ENCODE measurements at regions of chr12 and their contacts with region 1.

Region 1: GRCh38 chr12:103965590-103966504 is at the start of gene TDG:
- DNase-seq: peak in 1 of 2 donors; percentile 99
- H3K4me3 ChIP-seq: peak within 1 kb of the TSS; percentile 75 to 89
- H3K27ac ChIP-seq: peak within 1 kb of the TSS; percentile 91
- H3K4me1 ChIP-seq: peaks cover 52% of the 10 kb centered on the region
- H3K27me3 ChIP-seq: no peaks in the 10 kb centered on the region
- CTCF ChIP-seq: peak in 2 of 3 experiments; percentile 6 to 54
- POLR2A ChIP-seq: peak in 1 of 2 donors; percentile 78
- total RNA-seq, gene TDG: 24.6 TPM

Region 2: DNA sequence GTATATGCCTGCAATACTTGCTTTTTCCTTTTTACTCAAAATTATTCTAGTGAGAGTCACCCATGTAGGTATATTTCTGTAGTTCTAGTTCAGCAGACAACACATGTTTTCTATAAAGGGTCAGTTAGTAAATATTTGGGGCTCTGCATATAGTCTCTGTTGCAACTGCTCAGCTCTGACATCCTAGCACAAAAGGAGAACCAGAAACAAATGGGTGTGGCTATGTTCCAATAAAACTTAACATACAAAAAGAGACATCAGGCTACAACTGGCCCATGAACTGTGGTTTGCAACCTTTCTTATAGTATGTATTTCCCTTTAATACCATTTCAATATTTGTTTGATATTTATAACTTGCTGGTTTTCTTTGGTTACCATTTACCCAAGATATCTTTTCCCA is 136.8 kb before region 1 on chr12:
- intact Hi-C with region 1: no loop called
- DNase-seq: no peak
- H3K4me3 ChIP-seq: no peak overlapping the region
- H3K27ac ChIP-seq: no peak overlapping the region
- H3K4me1 ChIP-seq: peaks cover 64% of the 10 kb centered on the region
- H3K27me3 ChIP-seq: no peaks in the 10 kb centered on the region
- CTCF ChIP-seq: no peak
- POLR2A ChIP-seq: no peak

Region 3: DNA sequence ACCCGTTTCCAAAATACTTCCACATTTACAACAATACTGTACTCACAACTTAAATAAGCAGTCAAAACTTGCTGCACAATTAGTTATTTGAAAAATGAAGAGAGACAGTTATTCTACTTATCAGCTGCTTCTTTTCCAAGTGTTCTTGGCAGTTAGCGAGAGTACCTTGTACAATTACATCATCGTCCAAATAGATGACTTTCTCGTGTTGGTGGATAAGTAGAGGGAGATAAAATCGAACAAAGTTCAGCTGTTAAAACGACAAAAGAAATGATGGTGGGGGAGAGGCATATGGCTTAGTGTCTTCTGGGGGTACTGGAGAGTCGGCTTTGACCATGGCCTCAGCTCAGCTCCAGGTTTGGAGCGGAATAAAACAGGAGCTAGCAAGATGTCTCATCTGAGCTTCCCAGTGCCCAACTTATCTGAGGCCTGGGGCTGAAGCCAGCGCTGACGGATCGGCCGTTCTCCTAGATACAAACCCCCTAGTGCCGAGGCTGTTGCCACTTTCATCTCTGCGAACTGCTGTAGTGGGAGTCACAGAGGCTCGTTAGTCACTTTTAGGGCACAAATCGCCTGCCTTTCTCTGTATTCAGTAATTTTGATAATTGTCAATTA is 31.5 kb after region 1 on chr12:
- intact Hi-C with region 1: no loop called
- DNase-seq: peak in 1 of 2 donors; percentile 91
- H3K4me3 ChIP-seq: peak overlapping the region in 1 of 2 donors; percentile 8
- H3K27ac ChIP-seq: peak overlapping the region; percentile 60
- H3K4me1 ChIP-seq: no peaks in the 10 kb centered on the region
- H3K27me3 ChIP-seq: no peaks in the 10 kb centered on the region
- CTCF ChIP-seq: no peak
- POLR2A ChIP-seq: no peak

Region 4: GRCh38 chr12:104109446-104110271 is 143.8 kb after region 1 on chr12:
- intact Hi-C with region 1: loop called (anchors 10 kb)
- DNase-seq: no peak
- H3K4me3 ChIP-seq: no peak overlapping the region
- H3K27ac ChIP-seq: no peak overlapping the region
- H3K4me1 ChIP-seq: no peaks in the 10 kb centered on the region
- H3K27me3 ChIP-seq: no peaks in the 10 kb centered on the region
- CTCF ChIP-seq: no peak
- POLR2A ChIP-seq: no peak